H1 (cell line): ENCODE measurements at regions of chr5 and their contacts with region 1.

Region 1: GRCh38 chr5:114223866-114224265 is 138.0 kb upstream of the KCNN2 start:
- DNase-seq: no peak
- H3K4me3 ChIP-seq: no peak overlapping the region
- H3K27ac ChIP-seq: no peak overlapping the region
- H3K4me1 ChIP-seq: no peaks in the 10 kb centered on the region
- H3K27me3 ChIP-seq: no peaks in the 10 kb centered on the region
- CTCF ChIP-seq: peak in 2 of 3 experiments; percentile 41 to 59; a peak in 2 of 4 replicates
- EP300 ChIP-seq: no peak
- POLR2A ChIP-seq: no peak
- RAD21 ChIP-seq: peak; percentile 29 to 48

Region 2: GRCh38 chr5:114176356-114176755 is 47.5 kb before region 1 on chr5:
- CTCF ChIA-PET with region 1: no interaction called
- POLR2A ChIA-PET with region 1: no interaction called
- DNase-seq: no peak
- H3K4me3 ChIP-seq: no peak overlapping the region
- H3K27ac ChIP-seq: no peak overlapping the region
- H3K4me1 ChIP-seq: no peaks in the 10 kb centered on the region
- H3K27me3 ChIP-seq: peaks cover 0 to 1% (median 0%) of the 10 kb centered on the region in 4 experiments; a peak in 1 of 7 replicates
- CTCF ChIP-seq: no peak
- EP300 ChIP-seq: no peak
- POLR2A ChIP-seq: no peak
- RAD21 ChIP-seq: no peak

Region 3: DNA sequence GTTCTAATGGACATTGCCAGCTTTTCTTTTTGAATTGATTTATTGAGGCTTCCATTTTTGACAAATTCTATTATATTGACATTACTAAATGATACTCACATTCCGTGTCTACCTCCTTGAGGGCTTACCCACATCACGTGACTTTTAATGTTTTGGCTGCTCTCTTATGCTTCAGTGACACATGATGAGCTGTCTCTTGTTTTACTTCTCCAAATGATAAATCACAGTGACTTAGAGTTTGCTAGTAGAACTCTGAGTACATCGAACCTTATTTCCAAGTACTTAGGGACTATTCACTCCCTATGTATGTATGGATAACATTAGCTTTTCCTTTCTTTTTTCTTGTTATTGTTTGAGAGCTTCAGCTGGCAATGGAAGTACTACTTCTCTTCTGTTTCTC is 31.8 kb before region 1 on chr5:
- CTCF ChIA-PET with region 1: interaction called, 10 read pairs
- POLR2A ChIA-PET with region 1: no interaction called
- DNase-seq: no peak
- H3K4me3 ChIP-seq: no peak overlapping the region
- H3K27ac ChIP-seq: no peak overlapping the region
- H3K4me1 ChIP-seq: no peaks in the 10 kb centered on the region
- H3K27me3 ChIP-seq: no peaks in the 10 kb centered on the region
- CTCF ChIP-seq: no peak
- EP300 ChIP-seq: no peak
- POLR2A ChIP-seq: no peak
- RAD21 ChIP-seq: no peak

Region 4: DNA sequence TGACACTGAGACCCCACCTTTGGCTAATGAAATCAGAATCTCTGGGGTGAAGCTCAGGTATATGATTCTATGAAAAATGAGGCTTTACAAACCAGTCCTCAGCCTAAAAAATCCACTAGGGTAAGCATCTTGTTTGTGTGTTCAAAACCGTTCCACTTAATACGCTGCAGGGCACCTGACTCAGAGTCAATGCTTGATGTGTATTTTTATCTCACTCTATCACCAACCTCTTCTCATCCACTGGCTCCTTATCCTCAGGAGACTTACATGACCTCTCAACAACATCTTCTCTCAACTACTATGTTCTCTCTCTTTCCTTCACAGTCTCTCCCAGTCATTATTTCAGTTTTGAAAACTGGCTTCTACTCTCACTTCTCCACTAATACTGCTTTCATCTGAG is 15.3 kb before region 1 on chr5:
- CTCF ChIA-PET with region 1: interaction called, 16 read pairs
- POLR2A ChIA-PET with region 1: no interaction called
- DNase-seq: no peak
- H3K4me3 ChIP-seq: no peak overlapping the region
- H3K27ac ChIP-seq: no peak overlapping the region
- H3K4me1 ChIP-seq: 0 out of 7 replicates have a peak, but pooled peaks cover 0 to 2% (median 0%) of the 10 kb centered on the region in 4 experiments
- H3K27me3 ChIP-seq: no peaks in the 10 kb centered on the region
- CTCF ChIP-seq: no peak
- EP300 ChIP-seq: no peak
- POLR2A ChIP-seq: no peak
- RAD21 ChIP-seq: no peak

Region 5: GRCh38 chr5:114237766-114238165 is 13.9 kb after region 1 on chr5:
- CTCF ChIA-PET with region 1: interaction called, 28 read pairs
- POLR2A ChIA-PET with region 1: interaction called, 3 read pairs
- DNase-seq: no peak
- H3K4me3 ChIP-seq: no peak overlapping the region
- H3K27ac ChIP-seq: no peak overlapping the region
- H3K4me1 ChIP-seq: no peaks in the 10 kb centered on the region
- H3K27me3 ChIP-seq: no peaks in the 10 kb centered on the region
- CTCF ChIP-seq: no peak
- EP300 ChIP-seq: no peak
- POLR2A ChIP-seq: no peak
- RAD21 ChIP-seq: no peak